ENCODE measurements at regions of chr17 and their contacts with region 1.

Region 1: DNA sequence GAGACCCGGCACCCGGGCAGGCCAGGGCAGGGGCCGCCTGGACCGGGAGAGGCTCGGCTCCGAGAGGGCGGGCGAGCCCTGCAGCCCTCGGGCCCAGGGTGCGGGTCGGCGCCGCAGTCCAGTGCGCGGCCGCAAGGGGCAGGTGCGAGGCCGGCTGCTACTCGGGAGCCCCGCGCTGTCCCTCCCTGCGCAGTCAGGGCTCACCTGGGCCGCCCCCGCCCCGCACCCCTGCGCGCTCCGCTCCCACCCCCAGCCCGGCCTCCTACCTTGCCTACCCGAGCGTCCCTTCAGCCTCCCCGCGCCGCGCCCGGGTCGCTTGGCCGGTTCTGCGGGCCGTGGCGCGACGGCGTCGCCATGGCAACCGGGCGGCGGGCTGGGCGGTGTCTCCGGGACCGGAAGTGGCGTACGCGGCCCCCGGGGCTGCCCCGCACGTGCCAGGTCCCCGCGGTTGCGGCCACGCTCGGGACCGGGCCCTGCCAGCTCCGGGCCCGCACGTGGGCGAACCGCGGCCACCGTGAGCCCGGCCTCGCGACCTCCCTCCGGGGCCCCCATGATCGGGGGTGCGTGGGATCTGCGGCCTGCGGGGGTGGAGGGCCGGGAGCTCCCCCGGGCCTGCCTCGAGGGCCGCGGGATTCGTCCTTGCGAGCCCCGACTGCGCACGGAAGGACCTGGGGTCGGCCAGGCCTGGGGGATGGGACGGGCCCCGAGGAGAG is at the start of gene CYB561:
- DNase-seq: no peak
- H3K4me3 ChIP-seq: peak within 1 kb of the TSS; percentile 50
- CTCF ChIP-seq: peak; percentile 66

Region 2: GRCh38 chr17:63434876-63435684 is 11.1 kb before region 1 on chr17:
- CTCF ChIA-PET with region 1: interaction called, 30 read pairs
- POLR2A ChIA-PET with region 1: interaction called, 3 read pairs
- DNase-seq: no peak
- H3K4me3 ChIP-seq: no peak overlapping the region
- CTCF ChIP-seq: peak; percentile 8

Measured in AG04449 (cell line).